CD4-positive, alpha-beta T cell (primary cell): ENCODE measurements at regions of chr6 and their contacts with region 1.

Region 1: DNA sequence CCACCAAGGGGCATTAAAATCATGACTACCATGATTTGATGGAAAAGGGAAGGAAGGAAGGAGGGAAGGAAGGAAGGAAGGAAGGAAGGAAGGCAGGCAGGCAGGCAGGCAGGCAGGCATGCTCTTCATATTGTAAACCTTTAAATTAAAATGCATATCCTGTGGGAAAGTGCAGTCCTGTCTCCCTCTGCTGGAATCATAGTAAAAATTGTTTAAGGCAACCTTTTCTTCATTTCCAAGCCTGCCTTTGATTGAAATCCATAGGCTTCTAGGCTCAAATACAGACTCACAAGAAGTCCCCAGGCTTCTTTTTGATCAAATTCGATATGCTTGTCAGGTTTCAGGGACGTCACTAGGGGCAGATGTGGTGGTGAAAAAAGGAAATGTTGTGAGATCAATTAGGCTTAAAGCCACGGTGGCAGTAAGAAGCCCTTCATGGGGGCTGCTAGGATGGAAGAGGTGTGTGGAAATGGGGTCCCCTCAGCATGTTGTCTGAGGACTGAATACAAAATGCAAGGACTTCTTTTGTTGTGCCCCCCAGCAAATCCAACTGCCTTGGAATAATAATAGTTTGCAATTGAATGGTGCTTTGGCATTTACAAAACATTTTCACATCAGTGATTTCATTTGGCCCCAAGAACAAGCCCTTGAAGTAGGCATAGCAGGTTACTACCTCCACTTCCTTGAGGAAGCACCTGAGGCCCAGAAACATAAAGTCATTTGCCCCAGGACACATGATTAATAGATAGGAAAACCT is 25.6 kb upstream of the GABRR1 start:
- DNase-seq: peak in 4 of 14 experiments; percentile 11 to 54 (median 49)
- ATAC-seq: peak; percentile 34
- H3K4me3 ChIP-seq: no peak overlapping the region
- H3K4me3 Mint-ChIP-seq: no peak overlapping the region
- H3K27ac ChIP-seq: no peak overlapping the region
- H3K27ac Mint-ChIP-seq: no peak overlapping the region
- H3K4me1 ChIP-seq: peaks cover 13% of the 10 kb centered on the region
- H3K4me1 Mint-ChIP-seq: peaks cover 20% of the 10 kb centered on the region
- H3K27me3 ChIP-seq: no peaks in the 10 kb centered on the region
- H3K27me3 Mint-ChIP-seq: peaks cover 8% of the 10 kb centered on the region
- CTCF ChIP-seq: peak; percentile 38

Region 2: DNA sequence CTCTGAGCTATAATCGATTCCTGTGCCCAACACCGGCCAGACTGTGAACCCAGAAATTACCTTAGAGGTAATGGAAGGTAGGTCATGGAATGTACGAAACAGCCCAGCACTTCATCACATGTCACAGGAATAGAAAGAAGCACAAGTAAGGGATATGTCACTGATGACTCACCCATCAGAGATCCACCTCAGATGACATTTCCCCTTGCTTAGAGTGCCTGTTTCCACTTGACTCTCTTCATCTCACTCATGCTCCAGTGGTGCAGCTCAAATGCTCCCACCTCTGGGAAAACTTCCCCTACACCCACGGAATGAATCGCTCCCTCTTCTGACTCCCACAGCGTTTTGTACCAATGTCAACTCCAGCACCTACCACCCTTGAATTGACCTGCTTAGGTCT is 695.0 kb before region 1 on chr6:
- CTCF ChIA-PET with region 1: no interaction called
- POLR2A ChIA-PET with region 1: no interaction called
- intact Hi-C with region 1: no loop called
- DNase-seq: no peak
- ATAC-seq: no peak
- H3K4me3 ChIP-seq: no peak overlapping the region
- H3K4me3 Mint-ChIP-seq: no peak overlapping the region
- H3K27ac ChIP-seq: no peak overlapping the region
- H3K27ac Mint-ChIP-seq: no peak overlapping the region
- H3K4me1 ChIP-seq: no peaks in the 10 kb centered on the region
- H3K4me1 Mint-ChIP-seq: no peaks in the 10 kb centered on the region
- H3K27me3 ChIP-seq: no peaks in the 10 kb centered on the region
- H3K27me3 Mint-ChIP-seq: peaks cover 15% of the 10 kb centered on the region
- CTCF ChIP-seq: no peak

Region 3: GRCh38 chr6:89122625-89123024 is 120.1 kb before region 1 on chr6:
- CTCF ChIA-PET with region 1: no interaction called
- POLR2A ChIA-PET with region 1: no interaction called
- intact Hi-C with region 1: loop called in 1 of 2 experiments (anchors 5 kb)
- DNase-seq: peak in 3 of 14 experiments; percentile 38 to 45 (median 45)
- ATAC-seq: peak; percentile 66
- H3K4me3 ChIP-seq: no peak overlapping the region
- H3K4me3 Mint-ChIP-seq: no peak overlapping the region
- H3K27ac ChIP-seq: no peak overlapping the region
- H3K27ac Mint-ChIP-seq: no peak overlapping the region
- H3K4me1 ChIP-seq: peaks cover 5% of the 10 kb centered on the region
- H3K4me1 Mint-ChIP-seq: no peaks in the 10 kb centered on the region
- H3K27me3 ChIP-seq: no peaks in the 10 kb centered on the region
- H3K27me3 Mint-ChIP-seq: no peaks in the 10 kb centered on the region
- CTCF ChIP-seq: peak; percentile 24

Region 4: GRCh38 chr6:89321131-89321970 is 78.6 kb after region 1 on chr6:
- CTCF ChIA-PET with region 1: no interaction called
- POLR2A ChIA-PET with region 1: no interaction called
- intact Hi-C with region 1: no loop called
- DNase-seq: peak in 3 of 14 experiments; percentile 13 to 53 (median 45)
- ATAC-seq: no peak
- H3K4me3 ChIP-seq: no peak overlapping the region
- H3K4me3 Mint-ChIP-seq: no peak overlapping the region
- H3K27ac ChIP-seq: no peak overlapping the region
- H3K27ac Mint-ChIP-seq: no peak overlapping the region
- H3K4me1 ChIP-seq: no peaks in the 10 kb centered on the region
- H3K4me1 Mint-ChIP-seq: peaks cover 5% of the 10 kb centered on the region
- H3K27me3 ChIP-seq: no peaks in the 10 kb centered on the region
- H3K27me3 Mint-ChIP-seq: no peaks in the 10 kb centered on the region
- CTCF ChIP-seq: no peak